ENCODE measurements at regions of chr22 and their contacts with region 1.

Region 1: GRCh38 chr22:32411829-32412592 is at the start of gene RTCB:
- DNase-seq: peak; percentile 66
- H3K4me3 ChIP-seq: peak within 1 kb of the TSS; percentile 63
- H3K27me3 ChIP-seq: no peaks in the 10 kb centered on the region
- CTCF ChIP-seq: peak; percentile 13; the same call in 1 of the 2 replicates
- polyA plus RNA-seq, gene RTCB: 119 and 134 TPM in 2 replicates

Region 2: DNA sequence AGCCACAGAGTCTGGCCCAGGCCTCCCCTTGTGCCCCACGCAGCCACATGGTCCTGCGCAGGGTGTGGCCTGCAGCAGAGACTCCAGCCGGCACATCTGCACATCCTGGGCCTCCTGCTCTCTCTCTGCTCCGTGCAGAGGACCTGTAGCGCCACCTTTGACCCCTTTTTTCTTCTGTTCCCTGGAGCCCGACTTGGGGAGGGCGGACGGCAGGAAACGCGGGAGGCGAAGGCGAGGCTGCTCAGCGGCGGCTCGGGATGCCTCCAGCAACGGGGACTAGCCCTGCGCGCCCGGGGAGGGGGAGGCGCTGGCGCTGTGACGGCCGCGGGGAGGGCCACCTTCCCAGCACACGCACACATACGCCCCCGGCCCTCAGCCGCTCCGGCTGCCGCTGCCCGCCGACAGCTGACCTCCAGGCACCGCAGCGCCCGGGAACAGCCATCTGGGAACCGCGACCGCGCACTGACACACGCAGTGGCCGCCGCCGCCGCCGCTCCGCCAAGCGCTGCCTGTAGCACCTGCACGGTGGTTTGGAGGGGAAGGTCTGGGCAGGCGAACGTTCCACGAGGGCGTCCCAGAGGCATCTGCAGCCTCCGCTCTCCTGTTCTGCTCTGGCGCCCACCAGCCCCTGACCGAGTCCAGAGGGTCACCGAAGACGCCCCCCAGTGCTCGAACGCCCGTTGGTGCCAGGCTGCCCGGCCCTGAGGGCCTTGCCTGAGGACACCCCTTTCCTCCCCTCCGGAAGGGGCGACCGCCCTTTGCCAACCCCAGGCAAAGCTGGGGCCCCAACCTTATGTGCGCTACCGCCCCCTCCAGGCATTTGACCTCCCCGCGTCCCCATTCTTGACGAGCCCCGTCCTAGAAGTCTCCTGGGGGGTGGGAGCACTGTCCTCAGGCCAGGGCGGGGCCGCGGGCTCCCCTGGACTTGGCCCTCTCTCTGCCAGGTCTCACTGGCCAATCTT is 236.0 kb before region 1 on chr22:
- CTCF ChIA-PET with region 1: no interaction called
- POLR2A ChIA-PET with region 1: no interaction called
- DNase-seq: no peak
- H3K4me3 ChIP-seq: no peak overlapping the region
- H3K27me3 ChIP-seq: peaks cover 6% of the 10 kb centered on the region; the same call in 1 of the 2 replicates
- CTCF ChIP-seq: no peak

Region 3: GRCh38 chr22:32401486-32401885 is 10.5 kb before region 1 on chr22:
- CTCF ChIA-PET with region 1: interaction called, 10 read pairs
- POLR2A ChIA-PET with region 1: no interaction called
- DNase-seq: no peak
- H3K4me3 ChIP-seq: no peak overlapping the region
- H3K27me3 ChIP-seq: no peaks in the 10 kb centered on the region
- CTCF ChIP-seq: no peak

Region 4: DNA sequence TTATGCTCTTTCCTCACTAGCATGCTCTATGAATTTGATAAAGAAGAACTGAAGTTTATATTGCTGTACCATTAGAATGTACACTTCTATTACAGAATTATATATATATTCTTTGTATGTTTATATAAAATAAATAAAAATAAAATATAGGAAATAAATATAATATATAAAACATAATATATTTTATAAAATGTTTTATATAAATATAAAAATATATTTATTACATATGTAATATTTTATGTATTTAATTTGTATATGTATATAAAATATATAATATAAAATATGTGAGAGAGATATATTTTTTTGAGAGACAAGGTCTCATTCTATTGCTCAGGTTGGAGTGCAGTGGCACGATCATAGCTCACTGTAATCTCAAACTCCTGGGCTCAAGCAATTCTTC is 18.3 kb after region 1 on chr22:
- CTCF ChIA-PET with region 1: no interaction called
- POLR2A ChIA-PET with region 1: no interaction called
- DNase-seq: no peak
- H3K4me3 ChIP-seq: no peak overlapping the region
- H3K27me3 ChIP-seq: 0 out of 2 replicates have a peak, but pooled peaks cover 1% of the 10 kb centered on the region
- CTCF ChIP-seq: no peak

Region 5: GRCh38 chr22:32474635-32475467 is 62.8 kb after region 1 on chr22 and contains the start of gene FBXO7:
- CTCF ChIA-PET with region 1: interaction called, 16 read pairs
- POLR2A ChIA-PET with region 1: no interaction called
- DNase-seq: peak; percentile 26
- H3K4me3 ChIP-seq: peak within 1 kb of the TSS; percentile 97
- H3K27me3 ChIP-seq: no peaks in the 10 kb centered on the region
- CTCF ChIP-seq: peak; percentile 60
- polyA plus RNA-seq, gene FBXO7: 120 and 145 TPM in 2 replicates